Psoas muscle (tissue), 8 donors: ENCODE measurements at regions of chr18 and their contacts with region 1.

Region 1: DNA sequence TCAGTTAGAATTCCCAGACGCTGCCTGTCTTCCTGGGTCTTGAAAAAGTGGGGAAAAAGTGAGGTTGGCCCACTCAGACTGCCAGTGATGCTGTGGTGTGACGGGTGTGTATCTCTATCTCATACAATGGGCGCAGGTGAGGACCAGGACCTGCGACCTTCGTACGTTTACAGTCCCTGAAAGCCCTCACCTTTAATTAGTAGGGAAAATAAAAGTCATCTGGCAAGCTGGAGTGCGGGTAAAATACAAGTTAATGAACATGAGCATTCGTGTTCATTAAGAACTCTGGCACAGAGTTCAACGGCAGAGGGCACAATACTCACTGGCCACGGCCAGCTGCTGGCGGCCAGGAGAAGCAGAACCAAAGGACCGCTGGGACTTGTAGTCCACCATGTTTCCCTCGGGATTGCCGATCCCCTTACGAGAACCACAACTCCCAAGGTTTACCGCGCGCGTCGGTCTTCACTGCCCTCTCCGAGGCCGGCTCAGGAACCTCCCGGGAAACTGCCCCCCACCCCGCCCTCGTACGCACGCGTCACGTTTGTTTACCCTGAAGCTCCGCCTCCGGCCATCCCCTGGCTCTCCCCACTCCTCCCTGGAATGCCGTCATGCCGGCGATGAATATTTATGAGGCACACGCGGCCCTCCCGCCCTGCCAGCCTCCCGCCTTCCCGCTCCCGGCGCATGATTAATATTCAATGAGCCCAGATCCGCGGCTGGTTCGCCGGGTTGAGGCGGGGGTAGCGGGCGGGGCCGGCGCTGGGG is 488 bp upstream of the PHLPP1 start:
- DNase-seq: peak; percentile 100
- ATAC-seq: peak; percentile 96 to 99 (median 98)
- H3K4me3 ChIP-seq: peak overlapping the region; percentile 79
- H3K27ac ChIP-seq: peak overlapping the region; percentile 88
- H3K4me1 ChIP-seq: peaks cover 22% of the 10 kb centered on the region
- H3K27me3 ChIP-seq: no peaks in the 10 kb centered on the region
- CTCF ChIP-seq: peak; percentile 77

Region 2: DNA sequence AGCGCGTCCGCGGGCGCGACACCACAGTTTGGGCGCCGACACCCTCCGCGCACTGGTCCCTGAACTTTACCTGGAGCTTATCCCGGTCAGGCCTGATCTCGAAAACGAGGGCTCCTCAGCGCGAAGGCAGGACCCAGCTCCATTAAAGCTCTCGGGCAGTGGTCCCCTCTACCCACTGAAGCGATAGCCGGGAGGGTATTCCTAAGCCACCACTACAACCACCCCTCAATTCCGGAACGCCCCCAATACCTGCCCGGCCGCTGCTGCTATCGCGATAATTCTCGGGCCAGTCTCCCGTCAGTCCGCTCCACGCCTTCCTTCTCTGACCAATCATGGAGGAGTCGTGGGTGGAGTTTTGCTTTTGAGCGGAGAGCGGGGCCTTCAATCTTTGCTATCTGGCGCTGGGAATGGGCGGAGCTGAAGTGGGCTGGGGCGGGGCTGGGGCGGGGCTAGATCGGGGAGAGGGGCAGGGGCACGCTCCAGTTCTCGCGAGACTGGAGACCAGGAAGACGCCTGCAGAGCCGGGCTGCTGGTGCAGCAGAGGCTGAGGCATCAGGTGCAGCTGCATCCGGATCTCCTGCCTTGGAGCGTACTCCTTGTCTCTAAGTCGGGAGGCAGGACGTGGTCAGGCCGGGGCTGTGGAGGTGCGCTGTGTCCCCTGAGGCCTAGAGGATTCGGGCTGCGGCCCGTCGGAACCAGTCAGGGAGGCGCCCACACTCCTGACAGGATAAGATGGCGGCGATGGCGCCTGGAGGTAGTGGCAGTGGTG is 527.9 kb before region 1 on chr18 and contains the starts of genes PIGN and RELCH:
- intact Hi-C with region 1: loop called in 1 of 2 experiments (anchors 10 kb)
- DNase-seq: peak; percentile 91 to 95
- ATAC-seq: peak; percentile 95 to 99 (median 99)
- H3K4me3 ChIP-seq: peak within 1 kb of the TSS; percentile 100
- H3K27ac ChIP-seq: peak within 1 kb of the TSS; percentile 84
- H3K4me1 ChIP-seq: peaks cover 36% of the 10 kb centered on the region
- H3K27me3 ChIP-seq: no peaks in the 10 kb centered on the region
- CTCF ChIP-seq: no peak
- total RNA-seq, gene PIGN: 9.5 to 18.0 (median 13.0) TPM
- total RNA-seq, gene RELCH: 7.8 to 13.4 (median 10.9) TPM

Region 3: DNA sequence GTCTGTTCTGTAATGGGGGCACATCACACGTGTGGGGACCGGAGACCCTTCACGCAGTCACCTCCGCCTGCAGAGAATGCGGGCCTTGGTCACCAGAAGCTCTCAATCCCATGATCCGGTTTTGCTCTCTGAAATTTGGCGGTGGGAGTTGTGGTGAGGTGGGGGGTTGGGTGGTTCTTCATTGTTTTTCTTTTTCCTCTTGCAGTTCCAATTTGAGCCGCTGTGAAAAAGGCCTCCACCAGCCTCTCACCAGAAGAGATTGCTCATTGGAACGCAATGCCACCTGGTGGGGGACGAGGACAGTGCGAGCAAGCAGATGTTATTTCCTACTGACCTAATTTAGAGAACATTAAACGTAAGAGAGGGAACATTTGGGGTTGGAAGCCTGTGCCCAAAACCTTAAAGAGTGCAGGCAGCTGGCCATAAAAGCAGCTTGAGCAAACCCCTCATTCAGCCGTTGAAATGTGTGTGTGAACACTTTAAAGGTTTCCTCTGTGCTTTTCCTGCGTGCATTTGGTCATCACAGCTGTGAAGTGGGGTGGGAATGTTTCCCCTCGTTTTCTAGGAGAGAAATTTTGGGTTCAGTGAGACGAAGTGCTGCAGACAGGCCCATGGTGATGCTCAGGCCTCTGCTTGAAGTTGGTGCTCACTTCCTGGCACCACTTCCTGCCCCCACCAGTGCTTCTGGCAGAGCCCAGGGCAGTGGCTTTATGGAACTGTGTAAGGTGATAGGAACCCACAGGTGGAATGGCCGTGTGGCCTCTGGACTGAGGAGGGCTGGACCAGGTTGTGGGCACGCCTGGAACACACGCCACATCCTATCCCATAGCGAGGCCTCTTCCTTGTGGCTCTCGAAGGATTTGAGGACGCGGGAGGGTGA is 130.4 kb before region 1 on chr18:
- intact Hi-C with region 1: loop called in 1 of 2 experiments (anchors 5 kb)
- DNase-seq: peak; percentile 84 to 91
- ATAC-seq: peak; percentile 90 to 93 (median 90)
- H3K4me3 ChIP-seq: peak overlapping the region; percentile 28
- H3K27ac ChIP-seq: peak overlapping the region; percentile 13
- H3K4me1 ChIP-seq: peaks cover 16% of the 10 kb centered on the region
- H3K27me3 ChIP-seq: no peaks in the 10 kb centered on the region
- CTCF ChIP-seq: peak; percentile 91

Region 4: DNA sequence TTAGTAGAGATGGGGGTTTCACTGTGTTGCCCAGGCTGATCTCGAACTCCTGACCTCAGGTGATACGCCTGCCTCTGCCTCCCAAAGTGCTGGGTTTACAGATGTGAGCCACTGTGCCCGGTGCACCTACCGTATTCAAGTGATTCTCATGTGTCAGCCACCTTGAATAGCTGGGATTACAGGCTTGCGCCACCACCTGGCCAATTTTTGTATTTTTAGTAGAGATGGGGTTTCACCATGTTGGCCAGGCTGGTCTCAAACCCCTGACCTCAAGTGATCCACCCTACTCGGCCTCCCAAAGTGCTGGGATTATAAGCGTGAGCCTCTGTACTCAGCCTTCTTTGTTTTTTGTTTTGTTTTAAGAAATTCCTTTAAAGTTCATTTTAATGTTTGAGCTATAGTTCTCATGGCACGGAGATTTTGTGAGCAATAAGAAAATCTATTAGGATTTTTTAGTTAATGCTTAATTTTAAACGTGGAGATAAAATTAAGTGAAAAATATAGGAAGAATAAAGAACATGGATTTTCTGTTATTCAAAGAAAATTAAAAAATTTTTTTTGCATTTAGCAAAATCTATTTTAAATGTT is 243.1 kb after region 1 on chr18:
- intact Hi-C with region 1: loop called in 1 of 2 experiments (anchors 5 kb)
- DNase-seq: no peak
- ATAC-seq: no peak
- H3K4me3 ChIP-seq: no peak overlapping the region
- H3K27ac ChIP-seq: no peak overlapping the region
- H3K4me1 ChIP-seq: no peaks in the 10 kb centered on the region
- H3K27me3 ChIP-seq: no peaks in the 10 kb centered on the region
- CTCF ChIP-seq: peak; percentile 39

Region 5: GRCh38 chr18:63422087-63422809 is 707.4 kb after region 1 on chr18 and contains the start of gene VPS4B:
- intact Hi-C with region 1: loop called in 1 of 2 experiments (anchors 10 kb)
- DNase-seq: peak; percentile 100
- ATAC-seq: peak; percentile 97 to 99 (median 98)
- H3K4me3 ChIP-seq: peak within 1 kb of the TSS; percentile 98
- H3K27ac ChIP-seq: peak within 1 kb of the TSS; percentile 95
- H3K4me1 ChIP-seq: peaks cover 11% of the 10 kb centered on the region
- H3K27me3 ChIP-seq: no peaks in the 10 kb centered on the region
- CTCF ChIP-seq: no peak
- total RNA-seq, gene VPS4B: 17.7 to 24.8 (median 20.9) TPM